PC-9 (cell line): ENCODE measurements at regions of chr2 and their contacts with region 1.

Region 1: GRCh38 chr2:99141110-99142108 is at the start of gene C2orf15:
- DNase-seq: peak; percentile 94 to 99
- H3K4me3 ChIP-seq: peak within 1 kb of the TSS; percentile 86
- H3K27ac ChIP-seq: peak within 1 kb of the TSS; percentile 64
- H3K4me1 ChIP-seq: peaks cover 24% of the 10 kb centered on the region
- H3K27me3 ChIP-seq: no peaks in the 10 kb centered on the region
- CTCF ChIP-seq: no peak
- total RNA-seq, gene C2orf15: 16.9 and 18.0 TPM in 2 replicates

Region 2: GRCh38 chr2:99154643-99155536 is 13.5 kb after region 1 on chr2 and contains the starts of genes LIPT1 and TSGA10:
- CTCF ChIA-PET with region 1: interaction called, 3 read pairs
- POLR2A ChIA-PET with region 1: interaction called, 12 read pairs
- intact Hi-C with region 1: loop called (anchors 1 kb)
- DNase-seq: peak; percentile 81 to 89
- H3K4me3 ChIP-seq: peak within 1 kb of the TSS; percentile 68
- H3K27ac ChIP-seq: peak within 1 kb of the TSS; percentile 77
- H3K4me1 ChIP-seq: peaks cover 18% of the 10 kb centered on the region
- H3K27me3 ChIP-seq: no peaks in the 10 kb centered on the region
- CTCF ChIP-seq: peak; percentile 50
- total RNA-seq, gene LIPT1: 10.3 and 11.6 TPM in 2 replicates
- total RNA-seq, gene TSGA10: 13.5 and 14.9 TPM in 2 replicates